GM10248 (cell line): ENCODE measurements at regions of chr10 and their contacts with region 1.

Region 1: GRCh38 chr10:87534173-87534858 is 29.6 kb downstream of the MINPP1 start:
- DNase-seq: peak; percentile 20
- CTCF ChIP-seq: no peak

Region 2: GRCh38 chr10:87547734-87548311 is 13.5 kb after region 1 on chr10:
- CTCF ChIA-PET with region 1: interaction called, 11 read pairs
- POLR2A ChIA-PET with region 1: no interaction called
- DNase-seq: no peak
- CTCF ChIP-seq: no peak

Region 3: DNA sequence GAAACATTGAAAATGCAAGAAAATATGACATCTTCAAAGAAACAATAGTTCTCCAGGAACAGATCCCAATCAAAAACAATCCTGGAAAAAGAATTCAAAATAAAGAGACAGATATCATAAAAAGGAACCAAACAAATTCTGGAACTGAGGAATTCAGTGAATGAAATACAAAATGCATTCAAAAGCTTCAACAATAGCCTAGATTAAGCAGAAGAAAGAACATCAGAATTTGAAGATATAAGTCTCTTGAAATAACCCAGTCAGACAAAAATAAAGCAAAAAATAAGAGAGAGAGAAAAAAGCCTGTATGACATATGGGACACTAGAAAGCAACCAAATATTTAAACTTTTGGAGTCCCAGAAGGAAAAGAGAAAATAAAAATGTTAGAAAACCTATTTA is 30.7 kb after region 1 on chr10:
- CTCF ChIA-PET with region 1: no interaction called
- POLR2A ChIA-PET with region 1: no interaction called
- DNase-seq: no peak
- CTCF ChIP-seq: no peak